ENCODE measurements at regions of chr14 and their contacts with region 1.

Region 1: GRCh38 chr14:101707068-101707842 is 54.3 kb upstream of the PPP2R5C start:
- DNase-seq: peak; percentile 89
- ATAC-seq: peak; percentile 71
- H3K4me3 ChIP-seq: peak overlapping the region in 1 of 5 experiments; percentile 5
- H3K4me3 Mint-ChIP-seq: peak overlapping the region; percentile 65
- H3K27ac ChIP-seq: no peak overlapping the region
- H3K27ac Mint-ChIP-seq: peak overlapping the region; percentile 53
- H3K4me1 ChIP-seq: peaks cover 19 to 23% of the 10 kb centered on the region in 2 donors
- H3K4me1 Mint-ChIP-seq: peaks cover 22% of the 10 kb centered on the region
- H3K27me3 ChIP-seq: peaks cover 0 to 7% (median 1%) of the 10 kb centered on the region in 4 experiments
- H3K27me3 Mint-ChIP-seq: peaks cover 18% of the 10 kb centered on the region
- CTCF ChIP-seq: peak; percentile 90

Region 2: GRCh38 chr14:101761032-101761880 is 54.0 kb after region 1 on chr14 and contains the start of gene PPP2R5C:
- CTCF ChIA-PET with region 1: interaction called, 14 read pairs
- POLR2A ChIA-PET with region 1: interaction called, 3 read pairs
- intact Hi-C with region 1: loop called (anchors 2 kb)
- DNase-seq: peak; percentile 93
- ATAC-seq: peak; percentile 63
- H3K4me3 ChIP-seq: peak within 1 kb of the TSS; percentile 73 to 96 (median 87)
- H3K4me3 Mint-ChIP-seq: peak within 1 kb of the TSS; percentile 94
- H3K27ac ChIP-seq: peak within 1 kb of the TSS; percentile 66 to 78
- H3K27ac Mint-ChIP-seq: peak within 1 kb of the TSS; percentile 92
- H3K4me1 ChIP-seq: peaks cover 11 to 12% of the 10 kb centered on the region in 2 donors
- H3K4me1 Mint-ChIP-seq: peaks cover 14% of the 10 kb centered on the region
- H3K27me3 ChIP-seq: no peaks in the 10 kb centered on the region
- H3K27me3 Mint-ChIP-seq: no peaks in the 10 kb centered on the region
- CTCF ChIP-seq: no peak
- total RNA-seq, gene PPP2R5C: 330 and 337 TPM in 2 replicates

Region 3: GRCh38 chr14:101843665-101844064 is 136.4 kb after region 1 on chr14:
- CTCF ChIA-PET with region 1: interaction called, 35 read pairs
- POLR2A ChIA-PET with region 1: no interaction called
- intact Hi-C with region 1: loop called (anchors 1 kb)
- DNase-seq: peak; percentile 94
- ATAC-seq: peak; percentile 87
- H3K4me3 ChIP-seq: peak overlapping the region in 1 of 5 experiments; percentile 4
- H3K4me3 Mint-ChIP-seq: peak overlapping the region; percentile 67
- H3K27ac ChIP-seq: peak overlapping the region; percentile 37 to 75
- H3K27ac Mint-ChIP-seq: peak overlapping the region; percentile 81
- H3K4me1 ChIP-seq: peaks cover 49 to 51% of the 10 kb centered on the region in 2 donors
- H3K4me1 Mint-ChIP-seq: peaks cover 79% of the 10 kb centered on the region
- H3K27me3 ChIP-seq: no peaks in the 10 kb centered on the region
- H3K27me3 Mint-ChIP-seq: no peaks in the 10 kb centered on the region
- CTCF ChIP-seq: peak; percentile 87

Region 4: DNA sequence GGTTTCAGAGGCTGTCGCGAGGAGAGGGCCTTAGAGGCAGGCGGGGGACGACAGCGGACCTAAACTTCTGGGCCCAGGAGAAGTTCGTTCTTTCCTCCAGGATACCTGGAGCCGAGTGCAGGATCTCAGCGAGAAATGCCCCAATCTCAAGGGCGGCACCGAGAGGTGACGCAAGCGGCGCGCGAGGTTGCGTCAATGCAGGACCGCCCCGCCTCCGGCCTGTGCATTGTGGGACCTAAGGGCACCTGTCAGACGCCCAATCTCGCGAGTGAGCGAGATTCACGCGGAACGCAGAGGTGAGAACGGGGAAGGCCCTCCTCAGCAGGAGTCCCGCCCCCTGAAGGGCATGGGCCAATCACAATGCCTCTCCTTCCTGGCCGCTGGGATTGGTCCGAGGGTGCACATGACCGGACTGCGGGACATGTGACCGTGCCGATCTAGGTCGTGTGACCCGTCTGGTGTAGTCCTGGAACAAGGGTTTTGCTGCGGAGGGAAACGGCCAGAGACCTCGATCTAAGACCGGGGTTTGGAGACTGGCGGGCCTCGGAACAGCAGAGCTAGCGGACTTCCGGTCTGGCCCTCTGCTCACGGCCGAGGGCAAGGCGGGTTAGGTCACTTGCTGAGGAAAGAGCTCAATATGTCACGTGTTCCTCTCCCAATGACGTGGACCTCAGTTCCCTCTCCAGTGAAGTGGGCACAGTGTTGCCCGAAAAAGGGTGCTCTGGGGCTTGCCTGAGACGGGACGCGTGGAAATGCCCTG is 240.8 kb after region 1 on chr14:
- CTCF ChIA-PET with region 1: interaction called, 8 read pairs
- POLR2A ChIA-PET with region 1: no interaction called
- intact Hi-C with region 1: loop called (anchors 1 kb)
- DNase-seq: peak; percentile 100
- ATAC-seq: peak; percentile 96
- H3K4me3 ChIP-seq: peak overlapping the region; percentile 80 to 99 (median 91)
- H3K4me3 Mint-ChIP-seq: peak overlapping the region; percentile 97
- H3K27ac ChIP-seq: peak overlapping the region; percentile 97 to 99
- H3K27ac Mint-ChIP-seq: peak overlapping the region; percentile 99
- H3K4me1 ChIP-seq: peaks cover 10 to 18% of the 10 kb centered on the region in 2 donors
- H3K4me1 Mint-ChIP-seq: peaks cover 23% of the 10 kb centered on the region
- H3K27me3 ChIP-seq: peaks cover 0 to 13% (median 2%) of the 10 kb centered on the region in 4 experiments
- H3K27me3 Mint-ChIP-seq: peaks cover 25% of the 10 kb centered on the region
- CTCF ChIP-seq: no peak

Region 5: DNA sequence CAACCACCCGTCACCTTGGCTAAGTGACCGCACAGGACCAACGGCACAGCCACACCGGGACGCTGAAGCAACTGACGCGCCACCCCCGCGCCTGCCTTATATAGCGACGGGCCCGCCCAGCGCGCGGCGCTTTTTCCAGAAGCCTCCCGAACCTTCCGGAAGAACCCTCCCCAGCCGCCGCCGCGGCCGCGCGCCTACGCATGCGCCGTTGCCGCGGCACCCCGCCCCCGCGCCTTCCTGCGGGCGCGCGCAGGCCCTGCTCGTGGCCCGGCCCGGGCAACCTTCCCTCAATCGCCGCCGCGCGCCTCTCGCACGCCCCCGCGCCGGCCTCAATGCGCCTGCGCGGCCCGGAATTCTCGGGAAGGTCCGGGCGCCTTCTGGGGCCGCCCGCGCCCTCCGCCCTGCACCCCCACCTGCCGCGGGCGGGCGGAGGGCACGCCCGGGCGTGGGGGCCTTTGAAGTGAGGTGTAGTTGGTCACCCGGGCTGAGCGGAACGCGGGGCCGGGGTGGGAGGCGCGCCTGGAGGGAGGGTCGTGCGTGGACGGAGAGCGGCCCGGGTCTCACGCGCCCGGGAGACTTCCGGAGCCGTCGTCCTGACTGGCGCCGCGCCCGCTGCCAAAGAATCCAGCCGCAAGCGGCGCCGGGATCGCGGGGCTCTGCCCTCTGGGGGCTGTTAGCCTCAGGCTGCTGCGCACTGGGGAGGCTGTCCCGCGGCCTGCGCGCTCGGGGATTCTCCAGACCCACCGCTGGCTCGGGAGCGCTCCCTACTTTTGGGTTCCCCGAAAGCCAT is 379.9 kb after region 1 on chr14 and contains the start of gene HSP90AA1:
- CTCF ChIA-PET with region 1: interaction called, 5 read pairs
- POLR2A ChIA-PET with region 1: no interaction called
- intact Hi-C with region 1: loop called (anchors 2 kb)
- DNase-seq: peak; percentile 97
- ATAC-seq: peak; percentile 70
- H3K4me3 ChIP-seq: peak within 1 kb of the TSS; percentile 79 to 91 (median 84)
- H3K4me3 Mint-ChIP-seq: peak within 1 kb of the TSS; percentile 95
- H3K27ac ChIP-seq: peak within 1 kb of the TSS; percentile 96 to 98
- H3K27ac Mint-ChIP-seq: peak within 1 kb of the TSS; percentile 96
- H3K4me1 ChIP-seq: peaks cover 18 to 28% of the 10 kb centered on the region in 2 donors
- H3K4me1 Mint-ChIP-seq: peaks cover 55% of the 10 kb centered on the region
- H3K27me3 ChIP-seq: no peaks in the 10 kb centered on the region
- H3K27me3 Mint-ChIP-seq: no peaks in the 10 kb centered on the region
- CTCF ChIP-seq: no peak
- total RNA-seq, gene HSP90AA1: 222 and 225 TPM in 2 replicates

Region 6: GRCh38 chr14:103393676-103394626 is 1686.7 kb after region 1 on chr14:
- CTCF ChIA-PET with region 1: no interaction called
- POLR2A ChIA-PET with region 1: no interaction called
- intact Hi-C with region 1: no loop called
- DNase-seq: peak; percentile 44
- ATAC-seq: no peak
- H3K4me3 ChIP-seq: no peak overlapping the region
- H3K4me3 Mint-ChIP-seq: no peak overlapping the region
- H3K27ac ChIP-seq: no peak overlapping the region
- H3K27ac Mint-ChIP-seq: no peak overlapping the region
- H3K4me1 ChIP-seq: peaks cover 28 to 31% of the 10 kb centered on the region in 2 donors
- H3K4me1 Mint-ChIP-seq: peaks cover 63% of the 10 kb centered on the region
- H3K27me3 ChIP-seq: no peaks in the 10 kb centered on the region
- H3K27me3 Mint-ChIP-seq: no peaks in the 10 kb centered on the region
- CTCF ChIP-seq: peak; percentile 91